GM23248 (cell line): ENCODE measurements at regions of chr3 and their contacts with region 1.

Region 1: GRCh38 chr3:153026026-153026425 is 136.0 kb upstream of the RAP2B start:
- DNase-seq: peak; percentile 74
- H3K4me3 ChIP-seq: no peak overlapping the region
- H3K27ac ChIP-seq: no peak overlapping the region
- H3K4me1 ChIP-seq: peaks cover 19% of the 10 kb centered on the region
- H3K27me3 ChIP-seq: no peaks in the 10 kb centered on the region

Region 2: DNA sequence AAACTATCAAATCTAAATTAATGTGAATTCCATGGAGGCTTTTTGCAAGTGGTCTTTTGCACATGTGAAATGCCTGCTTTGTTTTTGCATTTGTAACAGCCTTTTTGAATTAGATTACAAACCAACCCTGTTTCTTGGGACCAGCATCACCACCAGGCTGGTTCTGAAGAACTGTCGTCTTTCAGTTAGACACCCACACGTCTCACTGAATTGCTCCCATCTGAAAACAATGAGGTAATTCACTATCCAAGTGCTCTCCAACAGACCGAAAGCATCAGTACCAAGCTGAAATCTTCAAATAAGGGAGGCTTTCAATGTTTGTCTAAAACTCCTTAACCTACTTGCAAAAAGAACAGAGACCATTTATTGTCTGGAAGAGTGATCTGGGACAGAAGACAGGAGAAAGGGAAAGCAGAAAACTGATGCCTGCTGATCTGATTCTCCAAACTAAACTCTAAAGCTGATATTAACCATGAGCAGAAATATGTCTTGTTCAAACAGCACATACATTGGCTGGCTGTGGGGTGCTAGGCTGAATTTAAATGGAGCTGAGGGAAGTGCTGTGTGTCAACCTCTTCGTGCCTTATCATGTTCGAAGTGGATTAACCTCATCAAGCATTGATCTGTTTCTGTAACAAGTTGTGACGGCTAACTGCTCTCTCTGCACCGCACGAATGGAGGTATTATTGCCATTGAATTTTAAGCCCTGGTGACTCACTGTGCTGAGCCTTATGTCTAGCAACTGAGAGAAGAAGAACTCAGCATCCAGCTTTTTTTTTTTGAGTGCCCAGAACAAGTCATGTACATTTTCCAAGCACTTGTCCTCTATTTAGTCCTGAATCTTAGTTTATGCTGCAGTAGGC is 404.8 kb before region 1 on chr3:
- in situ Hi-C with region 1: no loop called
- DNase-seq: peak; percentile 22
- H3K4me3 ChIP-seq: no peak overlapping the region
- H3K27ac ChIP-seq: no peak overlapping the region
- H3K4me1 ChIP-seq: no peaks in the 10 kb centered on the region
- H3K27me3 ChIP-seq: 0 out of 2 replicates have a peak, but pooled peaks cover 5% of the 10 kb centered on the region

Region 3: DNA sequence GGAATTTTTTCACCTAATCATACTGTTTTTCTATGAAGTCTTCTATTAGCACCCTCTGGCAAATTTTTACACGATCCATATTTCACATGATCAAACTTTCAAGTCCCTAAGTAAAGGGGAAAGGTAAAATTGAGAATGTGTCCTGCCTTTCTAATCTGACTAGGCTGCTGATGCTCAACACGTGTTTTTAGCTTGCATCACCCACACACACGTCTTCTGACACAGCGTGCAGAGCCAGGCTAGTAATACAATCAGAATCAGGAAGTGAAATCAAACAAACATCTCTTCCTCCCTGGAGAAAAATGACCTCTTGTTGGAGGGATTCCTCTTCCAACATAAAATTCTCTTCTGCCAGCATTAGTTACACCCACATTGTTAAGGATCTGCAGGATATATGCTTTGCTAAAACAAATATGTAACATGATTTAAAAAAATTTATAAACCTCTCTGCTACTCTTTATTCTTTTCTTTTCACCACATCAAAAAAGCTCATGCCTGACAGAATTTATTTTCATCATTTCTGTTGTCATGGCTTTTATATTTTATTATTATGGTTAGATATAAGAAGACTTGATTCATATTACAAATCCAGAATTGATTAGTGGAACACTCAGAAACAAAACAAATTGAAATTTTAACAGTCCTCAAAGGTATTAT is 258.4 kb after region 1 on chr3:
- in situ Hi-C with region 1: loop called (anchors 25 kb)
- DNase-seq: peak; percentile 96
- H3K4me3 ChIP-seq: peak overlapping the region; percentile 16; the same call in 1 of the 2 replicates
- H3K27ac ChIP-seq: peak overlapping the region; percentile 82
- H3K4me1 ChIP-seq: peaks cover 30% of the 10 kb centered on the region
- H3K27me3 ChIP-seq: no peaks in the 10 kb centered on the region

Region 4: DNA sequence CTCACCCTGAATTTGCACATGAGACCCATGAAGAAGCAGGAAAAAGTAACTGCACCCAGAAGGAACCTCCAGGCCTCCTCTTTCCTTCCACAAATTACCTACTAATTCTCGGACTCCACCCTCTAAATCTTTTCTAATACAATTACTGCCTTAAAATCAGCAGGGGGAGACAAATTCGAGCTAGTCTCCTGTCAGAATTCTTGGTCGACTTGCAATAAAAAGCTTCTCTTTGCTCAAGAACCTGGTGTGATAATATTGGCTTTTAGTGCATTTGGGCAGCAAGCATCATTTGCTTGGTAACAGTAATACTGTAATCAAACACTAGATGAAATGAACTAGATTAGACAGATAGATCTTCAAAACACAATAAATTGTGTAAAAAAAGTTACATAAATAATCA is 417.9 kb after region 1 on chr3:
- in situ Hi-C with region 1: loop called (anchors 25 kb)
- DNase-seq: peak; percentile 26
- H3K4me3 ChIP-seq: no peak overlapping the region
- H3K27ac ChIP-seq: no peak overlapping the region
- H3K4me1 ChIP-seq: peaks cover 5% of the 10 kb centered on the region; the same call in 1 of the 2 replicates
- H3K27me3 ChIP-seq: no peaks in the 10 kb centered on the region